Vagina (tissue), 2 donors: ENCODE measurements at regions of chr2 and their contacts with region 1.

Region 1: DNA sequence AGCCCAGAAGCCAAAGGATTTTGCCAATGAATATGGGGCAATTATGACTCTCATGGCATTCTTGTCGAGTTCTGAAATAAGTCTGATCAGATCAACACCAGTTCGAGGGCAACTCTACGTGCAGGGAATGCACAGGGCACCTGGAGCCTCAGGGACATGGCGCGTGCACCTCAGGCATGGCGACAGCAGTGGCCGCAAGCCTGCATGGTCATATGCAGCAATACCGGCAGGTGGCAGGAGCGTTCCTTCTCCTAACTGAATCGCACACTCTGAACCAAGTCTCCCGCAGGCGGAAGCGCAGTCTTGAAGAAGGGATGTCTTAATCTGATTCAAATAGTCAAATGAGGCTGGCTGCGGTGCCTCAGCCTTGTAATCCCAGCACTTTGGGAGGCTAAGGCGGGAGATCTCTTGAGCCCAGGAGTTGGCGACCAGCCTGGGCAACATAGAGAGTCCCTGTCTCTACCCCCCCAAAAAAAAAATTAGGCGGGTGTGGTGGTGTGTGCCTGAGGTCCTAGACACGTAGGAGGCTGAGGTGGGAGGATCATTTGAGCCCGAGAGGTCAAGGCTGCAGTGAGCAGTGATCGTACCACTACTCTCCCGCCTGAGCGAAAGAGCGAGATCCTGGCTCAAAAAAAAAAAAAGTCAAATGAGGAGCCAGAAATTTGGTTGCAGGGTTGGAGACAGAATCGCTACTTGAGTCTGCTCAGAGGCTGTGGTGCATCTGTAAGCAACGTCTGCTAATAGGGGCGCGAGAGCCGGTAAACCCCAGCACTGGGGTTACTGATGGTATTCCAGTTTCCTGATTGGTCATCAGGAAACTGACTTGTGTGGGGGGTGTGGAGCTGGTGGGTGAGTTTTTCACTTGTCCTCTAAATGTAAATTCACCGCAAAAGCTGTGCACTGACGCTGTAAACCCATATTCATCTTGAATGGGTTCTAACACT is 28.8 kb downstream of the FHL2 start:
- DNase-seq: no peak
- H3K4me3 ChIP-seq: no peak overlapping the region
- H3K27ac ChIP-seq: no peak overlapping the region
- H3K4me1 ChIP-seq: peaks cover 25% of the 10 kb centered on the region
- H3K27me3 ChIP-seq: no peaks in the 10 kb centered on the region
- CTCF ChIP-seq: peak; percentile 91 to 95 (median 94)
- POLR2A ChIP-seq: no peak

Region 2: DNA sequence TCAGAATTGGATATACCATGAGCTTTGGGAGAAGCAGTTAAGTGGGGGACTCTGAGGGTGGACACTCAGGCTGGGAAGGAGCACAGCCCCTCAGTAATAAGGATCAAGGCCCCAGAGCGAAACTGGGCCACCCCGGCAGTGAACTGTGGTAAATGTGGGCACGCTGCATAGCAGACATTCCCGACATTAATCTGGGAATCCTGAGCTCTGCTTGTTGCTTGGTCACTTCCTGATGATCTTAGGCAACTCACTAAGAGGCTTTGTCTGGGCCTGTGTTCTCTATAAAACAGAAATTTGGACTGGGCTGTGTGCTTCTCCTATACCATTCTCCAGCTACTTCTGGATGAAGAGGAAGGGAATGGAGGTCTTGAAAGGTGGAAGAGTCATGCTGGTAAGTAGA is 45.3 kb before region 1 on chr2:
- intact Hi-C with region 1: loop called (anchors 1 kb)
- DNase-seq: no peak
- H3K4me3 ChIP-seq: no peak overlapping the region
- H3K27ac ChIP-seq: no peak overlapping the region
- H3K4me1 ChIP-seq: peaks cover 39% of the 10 kb centered on the region
- H3K27me3 ChIP-seq: no peaks in the 10 kb centered on the region
- CTCF ChIP-seq: no peak
- POLR2A ChIP-seq: no peak

Region 3: DNA sequence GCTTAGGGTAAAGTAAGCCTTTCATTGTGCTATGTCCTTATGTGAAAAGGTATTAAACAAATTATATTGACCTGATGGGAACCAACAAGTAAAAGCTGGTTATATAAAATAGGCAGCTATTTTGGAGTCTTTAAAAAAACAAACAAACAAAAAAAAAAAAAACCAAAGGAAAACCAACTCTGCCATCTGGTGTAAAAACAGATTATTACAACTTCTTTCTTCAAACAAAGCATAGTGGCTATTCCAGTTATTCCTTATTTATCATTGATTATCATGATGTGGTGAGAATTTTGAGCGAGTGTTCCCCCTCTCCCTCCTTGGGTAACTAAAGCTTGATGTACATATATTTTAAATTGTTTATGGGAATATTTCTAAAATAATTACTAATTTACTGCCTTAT is 151.2 kb after region 1 on chr2:
- intact Hi-C with region 1: loop called (anchors 5 kb)
- DNase-seq: no peak
- H3K4me3 ChIP-seq: no peak overlapping the region
- H3K27ac ChIP-seq: no peak overlapping the region
- H3K4me1 ChIP-seq: peaks cover 12% of the 10 kb centered on the region
- H3K27me3 ChIP-seq: no peaks in the 10 kb centered on the region
- CTCF ChIP-seq: peak in 2 of 3 experiments; percentile 36 to 42
- POLR2A ChIP-seq: no peak